GM12878 (cell line): ENCODE measurements at regions of chr11 and their contacts with region 1.

Region 1: DNA sequence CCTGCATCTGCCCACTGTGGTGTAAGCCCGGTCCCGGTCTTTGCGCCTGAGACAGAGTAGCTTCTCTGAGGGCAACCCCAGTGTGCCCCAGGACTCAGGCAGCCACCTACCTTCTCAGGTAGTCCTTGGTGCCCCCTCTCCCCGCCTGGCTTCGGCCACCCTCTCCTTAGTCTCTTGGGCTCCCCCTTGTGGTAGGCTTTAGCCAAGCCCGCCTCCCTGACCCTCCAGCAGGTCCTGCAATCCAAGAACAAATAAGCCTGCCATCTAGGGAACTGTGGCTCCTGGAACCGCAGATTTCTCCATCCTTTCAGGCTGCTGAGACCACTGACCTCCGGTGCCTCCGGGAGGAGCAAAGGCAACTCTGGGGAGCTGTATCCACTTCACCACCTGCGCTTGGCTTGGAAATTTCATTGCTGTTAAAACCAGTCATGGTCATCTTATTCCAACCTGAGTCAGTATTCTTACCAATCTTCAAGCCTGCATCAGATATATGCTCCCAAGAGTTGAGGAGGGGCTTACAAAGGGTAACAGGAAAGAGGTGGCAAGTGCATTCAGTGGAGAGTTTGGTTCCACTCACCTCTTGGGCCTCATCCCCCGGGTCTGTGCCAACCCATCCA is 52.8 kb upstream of the TENM4 start:
- DNase-seq: no peak
- ATAC-seq: peak; percentile 99
- H3K4me3 ChIP-seq: no peak overlapping the region
- H3K27ac ChIP-seq: no peak overlapping the region
- H3K4me1 ChIP-seq: no peaks in the 10 kb centered on the region
- H3K27me3 ChIP-seq: no peaks in the 10 kb centered on the region; a peak in 1 of 4 replicates
- CTCF ChIP-seq: peak; percentile 84 to 95 (median 89)
- EP300 ChIP-seq: no peak
- POLR2A ChIP-seq: no peak
- RAD21 ChIP-seq: peak; percentile 84

Region 2: DNA sequence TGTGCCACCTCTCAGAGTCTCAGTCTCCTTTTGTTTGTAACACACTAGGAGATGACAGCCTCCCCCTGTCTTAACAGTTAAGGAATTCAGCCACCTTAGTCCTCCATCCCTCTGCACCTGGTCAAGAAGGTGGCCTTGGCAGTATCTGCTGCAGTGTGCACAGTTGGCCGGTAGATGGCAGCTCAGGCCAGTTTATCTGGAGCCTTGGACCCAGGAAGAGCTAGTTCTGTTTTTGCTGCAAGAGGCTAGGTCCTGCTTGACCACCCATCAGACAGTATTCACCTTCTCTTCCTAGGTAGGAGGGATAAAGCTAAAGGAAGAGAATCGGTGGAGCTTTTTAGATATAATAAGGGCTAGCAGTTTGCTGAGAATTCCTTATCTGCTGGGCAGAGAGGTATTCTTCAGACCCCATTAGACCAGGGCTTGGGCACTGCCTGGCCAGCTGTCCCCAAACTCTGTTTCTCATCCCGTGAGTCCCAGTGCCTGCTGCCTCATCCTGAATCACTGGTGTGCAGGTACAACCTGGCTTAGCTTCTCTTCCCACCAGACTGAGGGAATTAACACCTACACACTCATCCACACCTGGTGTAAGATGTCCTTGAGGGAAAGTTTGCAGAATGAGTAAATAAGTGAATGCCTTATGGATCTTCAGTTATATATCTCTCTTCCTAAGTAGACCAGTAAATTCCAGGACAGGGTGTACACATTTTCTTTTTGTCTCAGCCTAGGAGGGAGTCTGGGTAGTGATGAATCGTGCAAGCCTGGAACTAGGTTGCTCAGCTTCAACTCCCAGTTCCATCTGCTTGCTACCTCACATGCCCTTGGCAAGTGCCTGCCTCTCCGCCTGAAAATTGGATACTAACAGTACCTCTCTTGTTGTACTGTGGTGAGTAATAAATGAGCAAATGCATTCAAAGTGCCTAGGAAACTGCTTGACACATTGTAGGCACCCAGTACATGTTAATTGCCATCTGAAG is 848.1 kb before region 1 on chr11:
- CTCF ChIA-PET with region 1: interaction called, 11 read pairs
- POLR2A ChIA-PET with region 1: no interaction called
- RAD21 ChIA-PET with region 1: interaction called, 3 read pairs
- SMC1A ChIA-PET with region 1: interaction called, 7 read pairs
- in situ Hi-C with region 1: loop called (anchors 25 kb)
- intact Hi-C with region 1: loop called (anchors 1 kb)
- DNase-seq: peak; percentile 35
- ATAC-seq: peak; percentile 95
- H3K4me3 ChIP-seq: no peak overlapping the region
- H3K27ac ChIP-seq: no peak overlapping the region
- H3K4me1 ChIP-seq: no peaks in the 10 kb centered on the region
- H3K27me3 ChIP-seq: peaks cover 0 to 6% of the 10 kb centered on the region in 2 experiments; a peak in 2 of 4 replicates
- CTCF ChIP-seq: peak; percentile 94 to 98 (median 97)
- EP300 ChIP-seq: no peak
- POLR2A ChIP-seq: no peak
- RAD21 ChIP-seq: peak; percentile 93

Region 3: GRCh38 chr11:79331203-79331901 is 162.3 kb before region 1 on chr11:
- CTCF ChIA-PET with region 1: no interaction called
- POLR2A ChIA-PET with region 1: no interaction called
- RAD21 ChIA-PET with region 1: no interaction called
- SMC1A ChIA-PET with region 1: no interaction called
- in situ Hi-C with region 1: no loop called
- intact Hi-C with region 1: no loop called
- DNase-seq: no peak
- ATAC-seq: no peak
- H3K4me3 ChIP-seq: no peak overlapping the region
- H3K27ac ChIP-seq: no peak overlapping the region
- H3K4me1 ChIP-seq: no peaks in the 10 kb centered on the region
- H3K27me3 ChIP-seq: peaks cover 0 to 10% of the 10 kb centered on the region in 2 experiments; a peak in 1 of 4 replicates
- CTCF ChIP-seq: no peak
- EP300 ChIP-seq: no peak
- POLR2A ChIP-seq: no peak
- RAD21 ChIP-seq: no peak

Region 4: DNA sequence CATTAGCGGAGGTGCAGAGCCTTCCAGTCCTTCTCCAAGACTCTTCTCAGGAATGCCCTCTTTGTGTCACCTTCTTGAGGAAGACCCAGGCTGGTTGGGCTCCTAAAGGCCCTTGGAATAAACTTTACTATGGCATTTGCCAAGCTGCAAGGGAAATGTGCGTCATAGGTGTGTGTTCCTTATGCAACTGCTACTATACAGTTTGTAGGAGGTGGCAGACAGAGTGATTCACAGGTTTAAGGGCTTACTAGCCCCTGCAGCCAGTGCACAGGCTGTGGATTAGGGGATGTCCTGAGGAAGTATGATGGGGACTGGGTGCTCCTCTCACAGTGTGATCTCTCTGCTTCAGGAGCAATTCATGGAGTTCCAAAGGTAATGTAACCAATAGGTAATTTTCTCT is 127.4 kb before region 1 on chr11:
- CTCF ChIA-PET with region 1: interaction called, 16 read pairs
- POLR2A ChIA-PET with region 1: no interaction called
- RAD21 ChIA-PET with region 1: interaction called, 3 read pairs
- SMC1A ChIA-PET with region 1: no interaction called
- in situ Hi-C with region 1: no loop called
- intact Hi-C with region 1: no loop called
- DNase-seq: no peak
- ATAC-seq: no peak
- H3K4me3 ChIP-seq: no peak overlapping the region
- H3K27ac ChIP-seq: no peak overlapping the region
- H3K4me1 ChIP-seq: no peaks in the 10 kb centered on the region
- H3K27me3 ChIP-seq: no peaks in the 10 kb centered on the region
- CTCF ChIP-seq: no peak
- EP300 ChIP-seq: no peak
- POLR2A ChIP-seq: no peak
- RAD21 ChIP-seq: no peak

Region 5: GRCh38 chr11:79393362-79394043 is 100.2 kb before region 1 on chr11:
- CTCF ChIA-PET with region 1: interaction called, 13 read pairs
- POLR2A ChIA-PET with region 1: no interaction called
- RAD21 ChIA-PET with region 1: interaction called, 3 read pairs
- SMC1A ChIA-PET with region 1: interaction called, 4 read pairs
- in situ Hi-C with region 1: no loop called
- intact Hi-C with region 1: no loop called
- DNase-seq: no peak
- ATAC-seq: peak; percentile 47
- H3K4me3 ChIP-seq: no peak overlapping the region
- H3K27ac ChIP-seq: no peak overlapping the region
- H3K4me1 ChIP-seq: no peaks in the 10 kb centered on the region
- H3K27me3 ChIP-seq: 0 out of 4 replicates have a peak, but pooled peaks cover 0 to 2% of the 10 kb centered on the region in 2 experiments
- CTCF ChIP-seq: no peak
- EP300 ChIP-seq: no peak
- POLR2A ChIP-seq: no peak
- RAD21 ChIP-seq: no peak

Region 6: GRCh38 chr11:79400717-79401686 is 92.7 kb before region 1 on chr11:
- CTCF ChIA-PET with region 1: interaction called, 230 read pairs
- POLR2A ChIA-PET with region 1: no interaction called
- RAD21 ChIA-PET with region 1: interaction called, 72 read pairs
- SMC1A ChIA-PET with region 1: interaction called, 127 read pairs
- in situ Hi-C with region 1: no loop called
- intact Hi-C with region 1: loop called (anchors 1 kb)
- DNase-seq: no peak
- ATAC-seq: peak; percentile 97
- H3K4me3 ChIP-seq: no peak overlapping the region
- H3K27ac ChIP-seq: no peak overlapping the region
- H3K4me1 ChIP-seq: 0 out of 2 replicates have a peak, but pooled peaks cover 3% of the 10 kb centered on the region
- H3K27me3 ChIP-seq: no peaks in the 10 kb centered on the region
- CTCF ChIP-seq: peak; percentile 77 to 82 (median 79)
- EP300 ChIP-seq: no peak
- POLR2A ChIP-seq: no peak
- RAD21 ChIP-seq: peak; percentile 78

Region 7: DNA sequence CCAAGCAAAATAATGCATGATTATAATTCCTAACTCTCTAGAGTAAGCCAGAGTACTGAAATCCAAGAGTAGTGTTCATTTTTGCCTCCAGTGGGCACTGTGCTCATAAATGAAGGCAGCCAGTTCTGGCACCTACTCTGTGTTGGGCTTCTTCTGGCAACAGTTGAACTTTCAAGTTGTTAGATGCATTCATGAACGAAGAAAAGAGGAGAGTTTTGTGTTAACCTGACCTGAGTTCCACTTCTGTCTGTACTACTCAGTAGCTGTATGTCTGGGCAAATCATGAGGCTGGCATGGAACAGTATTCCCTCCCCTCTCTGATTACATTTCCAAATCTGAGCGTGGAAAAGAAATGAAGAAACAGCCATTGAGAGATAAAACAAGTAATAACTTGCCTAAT is 32.5 kb before region 1 on chr11:
- CTCF ChIA-PET with region 1: interaction called, 124 read pairs
- POLR2A ChIA-PET with region 1: no interaction called
- RAD21 ChIA-PET with region 1: interaction called, 21 read pairs
- SMC1A ChIA-PET with region 1: interaction called, 9 read pairs
- in situ Hi-C with region 1: no loop called
- intact Hi-C with region 1: loop called (anchors 1 kb)
- DNase-seq: no peak
- ATAC-seq: peak; percentile 91
- H3K4me3 ChIP-seq: no peak overlapping the region
- H3K27ac ChIP-seq: no peak overlapping the region
- H3K4me1 ChIP-seq: no peaks in the 10 kb centered on the region
- H3K27me3 ChIP-seq: no peaks in the 10 kb centered on the region; a peak in 2 of 4 replicates
- CTCF ChIP-seq: peak; percentile 47 to 58 (median 56)
- EP300 ChIP-seq: no peak
- POLR2A ChIP-seq: no peak
- RAD21 ChIP-seq: peak; percentile 63

Region 8: DNA sequence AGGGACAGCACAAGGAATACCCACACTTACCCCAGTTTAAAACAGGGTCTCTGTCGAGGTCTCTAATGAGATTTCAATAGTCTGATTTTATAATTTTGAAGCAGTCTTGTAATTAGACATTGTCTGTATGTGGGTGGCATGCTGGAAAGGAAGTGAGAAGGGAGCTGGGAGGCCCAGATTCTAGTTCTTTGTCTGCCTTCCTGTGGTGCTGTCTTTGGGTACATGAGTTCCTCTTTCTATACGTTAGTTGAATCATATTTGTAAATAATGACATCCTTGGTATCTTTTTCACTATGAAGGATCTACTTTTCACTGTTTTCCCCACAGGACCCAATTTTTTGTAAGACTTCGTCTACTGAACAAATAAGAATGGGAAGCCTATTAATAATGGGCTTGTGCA is 10.9 kb before region 1 on chr11:
- CTCF ChIA-PET with region 1: interaction called, 42 read pairs
- POLR2A ChIA-PET with region 1: no interaction called
- RAD21 ChIA-PET with region 1: interaction called, 30 read pairs
- SMC1A ChIA-PET with region 1: interaction called, 22 read pairs
- in situ Hi-C with region 1: no loop called
- intact Hi-C with region 1: no loop called
- DNase-seq: peak; percentile 72
- ATAC-seq: peak; percentile 89
- H3K4me3 ChIP-seq: no peak overlapping the region
- H3K27ac ChIP-seq: no peak overlapping the region; the same call in 1 of the 2 replicates
- H3K4me1 ChIP-seq: peaks cover 26% of the 10 kb centered on the region
- H3K27me3 ChIP-seq: no peaks in the 10 kb centered on the region
- CTCF ChIP-seq: no peak
- EP300 ChIP-seq: peak; percentile 85 to 99; a peak in 3 of 4 replicates
- POLR2A ChIP-seq: no peak
- RAD21 ChIP-seq: no peak

Region 9: GRCh38 chr11:79541466-79541865 is 47.8 kb after region 1 on chr11:
- CTCF ChIA-PET with region 1: no interaction called
- POLR2A ChIA-PET with region 1: no interaction called
- RAD21 ChIA-PET with region 1: no interaction called
- SMC1A ChIA-PET with region 1: no interaction called
- in situ Hi-C with region 1: no loop called
- intact Hi-C with region 1: no loop called
- DNase-seq: no peak
- ATAC-seq: no peak
- H3K4me3 ChIP-seq: no peak overlapping the region
- H3K27ac ChIP-seq: no peak overlapping the region
- H3K4me1 ChIP-seq: no peaks in the 10 kb centered on the region
- H3K27me3 ChIP-seq: no peaks in the 10 kb centered on the region; a peak in 1 of 4 replicates
- CTCF ChIP-seq: no peak
- EP300 ChIP-seq: no peak
- POLR2A ChIP-seq: no peak
- RAD21 ChIP-seq: no peak